Activated CD4-positive, alpha-beta T cell treated with anti-CD3 and anti-CD28 coated beads for 36 hours (primary cell): ENCODE measurements at regions of chr1 and their contacts with region 1.

Region 1: GRCh38 chr1:110756506-110756905 is 81.8 kb upstream of the KCNA3 start:
- DNase-seq: no peak
- ATAC-seq: no peak
- H3K4me3 Mint-ChIP-seq: no peak overlapping the region
- H3K27ac Mint-ChIP-seq: no peak overlapping the region
- H3K4me1 Mint-ChIP-seq: peaks cover 5% of the 10 kb centered on the region
- H3K27me3 Mint-ChIP-seq: peaks cover 5% of the 10 kb centered on the region

Region 2: DNA sequence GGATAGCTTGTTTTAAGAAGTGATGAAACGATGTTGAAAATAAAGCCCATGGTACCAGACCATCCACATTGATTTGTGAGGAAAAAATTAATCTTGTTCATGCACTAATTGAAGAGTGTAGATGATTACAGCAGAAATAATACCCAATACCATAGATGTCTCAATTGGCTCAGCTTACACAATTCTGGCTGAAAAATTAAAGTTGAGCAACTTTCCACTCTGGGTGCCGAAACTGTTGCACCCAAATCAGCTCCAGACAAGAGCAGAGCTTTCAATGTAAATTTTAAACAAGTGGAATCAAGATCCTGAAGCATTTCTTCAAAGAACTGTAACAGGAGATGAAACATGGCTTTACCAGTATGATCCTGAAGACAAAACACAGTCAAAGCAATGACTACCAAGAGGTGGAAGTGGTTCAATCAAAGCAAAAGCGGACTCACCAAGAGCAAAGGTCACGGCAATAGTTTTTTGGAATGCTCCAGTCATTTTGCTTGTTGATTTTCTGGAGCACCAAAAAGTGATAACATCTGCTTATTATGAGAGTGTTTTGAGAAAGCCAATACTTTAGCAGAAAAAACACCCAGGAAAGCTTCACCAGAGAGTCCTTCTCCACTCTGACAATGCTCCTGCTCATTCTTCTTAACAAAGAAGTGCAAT is 65.7 kb before region 1 on chr1:
- CTCF ChIA-PET with region 1: no interaction called
- POLR2A ChIA-PET with region 1: no interaction called
- intact Hi-C with region 1: loop called in 1 of 2 experiments (anchors 5 kb)
- DNase-seq: no peak
- ATAC-seq: no peak
- H3K4me3 Mint-ChIP-seq: no peak overlapping the region
- H3K27ac Mint-ChIP-seq: no peak overlapping the region
- H3K4me1 Mint-ChIP-seq: no peaks in the 10 kb centered on the region
- H3K27me3 Mint-ChIP-seq: no peaks in the 10 kb centered on the region

Region 3: DNA sequence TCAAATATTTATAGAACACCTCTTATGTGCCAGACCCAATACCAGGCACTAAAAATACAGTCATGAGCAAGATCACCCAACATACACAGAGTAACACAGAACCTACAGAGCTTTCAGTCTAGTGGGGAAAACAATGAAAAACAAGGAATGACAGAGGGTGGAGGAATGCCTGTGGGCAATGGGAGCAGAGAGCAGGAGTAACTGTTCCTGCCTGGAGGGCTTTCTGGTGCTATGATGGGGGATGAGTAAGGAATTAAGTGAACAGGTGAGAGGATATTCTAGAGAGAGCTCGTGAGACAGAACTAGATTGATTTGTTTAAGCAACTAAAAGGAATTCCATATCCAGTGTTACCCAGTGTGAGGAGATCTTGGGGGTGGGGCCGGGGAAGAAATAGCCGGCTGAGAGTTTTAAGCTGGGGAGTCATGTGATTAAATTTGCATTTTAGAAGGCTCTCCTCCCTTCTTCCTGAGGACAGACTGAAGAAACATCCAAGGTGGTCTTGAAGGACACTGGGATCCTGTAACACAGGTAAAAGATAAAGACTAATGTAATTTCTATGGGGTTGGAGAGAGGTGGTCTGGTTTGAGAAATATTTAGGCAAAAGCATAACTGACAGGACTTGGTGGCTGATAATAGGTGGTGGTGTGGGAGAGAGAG is 114.4 kb after region 1 on chr1:
- CTCF ChIA-PET with region 1: no interaction called
- POLR2A ChIA-PET with region 1: no interaction called
- intact Hi-C with region 1: no loop called
- DNase-seq: no peak
- ATAC-seq: no peak
- H3K4me3 Mint-ChIP-seq: peak overlapping the region; percentile 85
- H3K27ac Mint-ChIP-seq: peak overlapping the region; percentile 95
- H3K4me1 Mint-ChIP-seq: peaks cover 30% of the 10 kb centered on the region
- H3K27me3 Mint-ChIP-seq: no peaks in the 10 kb centered on the region